ENCODE measurements at regions of chr5 and their contacts with region 1.

Region 1: DNA sequence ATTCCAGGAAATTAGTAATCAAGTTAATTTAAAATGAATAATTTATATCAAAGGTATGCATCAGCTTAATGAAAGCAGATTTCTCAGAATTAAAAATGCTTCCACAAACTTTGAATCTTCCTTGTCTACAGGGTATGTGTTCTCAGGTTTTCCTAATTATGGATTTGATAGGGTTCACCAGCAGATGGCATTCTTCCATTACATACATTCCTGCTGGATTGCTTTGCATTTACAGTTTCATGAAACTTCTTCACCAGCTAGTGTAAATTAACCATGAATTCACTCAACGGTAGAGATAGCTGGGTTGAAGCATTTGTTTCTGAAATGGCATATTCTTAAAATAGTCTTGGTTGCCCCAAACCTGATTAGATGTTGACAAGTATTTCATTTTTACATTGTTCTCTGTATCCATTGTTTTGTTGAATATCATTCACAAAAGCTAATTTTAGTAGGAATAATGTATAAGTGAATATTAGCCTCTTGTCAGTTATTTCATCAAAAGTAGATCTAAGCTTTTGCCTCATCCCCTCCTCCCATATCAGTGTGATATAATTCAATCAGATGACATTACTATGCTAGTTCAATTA is 68.7 kb upstream of the WDR41 start:
- DNase-seq: no peak
- ATAC-seq: no peak

Region 2: DNA sequence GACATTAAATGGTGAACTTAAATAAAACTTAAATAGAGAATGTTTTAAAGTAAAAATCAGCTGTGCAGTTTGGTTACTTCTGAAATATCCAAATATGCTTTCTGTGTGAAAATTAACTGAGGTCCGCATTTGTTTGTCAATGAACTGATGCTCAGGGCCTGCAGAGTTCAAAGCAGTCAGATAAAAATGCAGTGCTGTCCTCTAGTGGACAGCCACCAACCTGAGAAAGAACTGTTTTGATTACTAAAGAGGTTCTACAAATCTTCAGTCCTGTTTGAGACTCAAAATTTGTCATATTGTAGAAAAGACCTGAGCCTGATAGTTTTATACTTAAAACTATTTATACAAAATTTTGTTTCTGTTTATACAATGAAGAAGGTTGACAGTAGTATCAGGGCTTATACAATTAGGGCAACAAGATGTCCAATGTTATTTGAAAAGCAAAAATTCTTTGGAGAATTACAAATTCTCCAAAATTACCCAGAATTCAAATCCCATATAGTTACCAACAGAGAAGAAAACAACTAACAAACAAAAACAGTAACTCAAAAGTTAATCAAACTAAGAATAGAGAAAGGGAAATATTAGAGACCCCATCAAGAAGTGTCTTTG is 447.7 kb after region 1 on chr5:
- intact Hi-C with region 1: loop called (anchors 2 kb)
- DNase-seq: no peak
- ATAC-seq: no peak

Region 3: GRCh38 chr5:78162253-78162862 is 601.6 kb after region 1 on chr5:
- intact Hi-C with region 1: loop called (anchors 10 kb)
- DNase-seq: no peak
- ATAC-seq: no peak

Region 4: GRCh38 chr5:78269088-78269703 is 708.4 kb after region 1 on chr5:
- intact Hi-C with region 1: loop called (anchors 5 kb)
- DNase-seq: no peak
- ATAC-seq: no peak

Measured in Right ventricle myocardium inferior (tissue), 1 donor.